ENCODE measurements at regions of chr2 and their contacts with region 1.

Region 1: DNA sequence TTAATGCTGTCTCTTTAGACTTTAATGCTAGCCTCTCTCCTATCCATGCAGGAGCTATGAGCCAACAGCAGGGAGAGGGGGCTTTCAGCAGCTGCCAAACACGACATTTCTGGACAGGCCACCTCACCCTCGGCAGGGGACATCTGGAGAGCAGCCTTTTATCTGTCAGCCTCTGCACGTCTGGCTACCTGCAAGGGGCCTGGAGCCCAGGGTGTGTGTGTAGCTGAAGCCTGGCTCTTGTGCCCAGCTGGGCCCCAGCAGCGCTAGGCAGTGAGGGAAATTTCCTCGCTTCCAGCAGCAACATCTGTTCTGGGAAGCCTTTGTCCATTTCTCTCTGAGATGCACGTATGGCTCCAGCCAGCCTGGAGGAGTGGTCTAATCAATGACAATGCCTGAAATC is 728.7 kb upstream of the ID2 start:
- DNase-seq: peak; percentile 89
- H3K4me3 ChIP-seq: no peak overlapping the region
- H3K27ac ChIP-seq: peak overlapping the region in 1 of 2 experiments; percentile 91; a peak in 2 of 4 replicates
- H3K4me1 ChIP-seq: peaks cover 0 to 35% of the 10 kb centered on the region in 2 experiments; a peak in 2 of 4 replicates
- H3K27me3 ChIP-seq: no peaks in the 10 kb centered on the region
- CTCF ChIP-seq: no peak
- EP300 ChIP-seq: peak in 1 of 2 experiments; percentile 83; a peak in 1 of 4 replicates
- RAD21 ChIP-seq: no peak

Region 2: DNA sequence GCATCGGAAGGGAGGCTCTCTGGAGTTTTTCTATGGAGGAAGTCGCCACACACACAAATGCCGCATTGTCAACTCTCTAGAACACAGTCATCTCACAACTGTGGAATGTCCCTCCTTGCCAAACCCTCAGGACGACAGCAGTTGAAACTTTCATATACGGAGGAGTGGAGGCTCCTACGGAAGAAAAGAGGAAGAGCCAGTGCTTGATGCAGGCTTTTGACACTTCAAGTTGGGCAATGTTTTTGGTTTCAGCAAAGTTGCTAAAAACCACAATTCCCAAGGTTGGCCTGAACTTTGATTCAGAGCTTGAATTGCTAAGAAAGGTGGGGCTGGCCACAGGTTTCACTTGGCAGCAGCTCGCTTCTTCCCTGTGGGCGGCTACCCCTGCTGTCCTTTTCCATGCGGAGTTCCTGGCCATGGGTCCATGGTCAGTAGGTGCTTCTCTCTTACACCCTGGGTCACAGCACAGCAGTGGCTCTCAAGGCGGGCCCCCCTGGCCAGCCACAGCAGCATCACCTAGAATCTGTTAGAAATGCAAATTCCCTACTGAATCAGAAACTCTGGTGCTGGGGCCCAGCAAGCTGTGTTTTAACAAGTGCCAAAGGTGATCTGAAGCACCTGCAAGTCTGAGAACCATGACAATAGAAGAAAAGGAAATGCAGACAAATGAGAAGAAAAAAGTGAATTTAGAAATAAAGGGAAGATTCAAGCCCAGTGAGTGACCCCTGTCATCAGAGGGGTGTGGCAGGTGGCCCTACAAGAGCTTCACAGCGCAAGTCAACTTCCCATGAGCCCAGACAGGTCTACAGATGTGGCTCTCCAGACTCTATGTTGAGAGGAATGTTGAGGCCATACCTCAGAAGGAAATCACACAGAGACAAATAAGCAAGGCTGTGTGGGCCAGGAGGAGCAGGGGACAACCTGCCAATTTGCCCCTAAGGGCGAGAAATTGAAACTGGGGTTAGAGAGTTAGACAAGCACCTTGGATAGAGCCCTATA is 179.5 kb before region 1 on chr2:
- CTCF ChIA-PET with region 1: no interaction called
- POLR2A ChIA-PET with region 1: no interaction called
- DNase-seq: no peak
- H3K4me3 ChIP-seq: no peak overlapping the region
- H3K27ac ChIP-seq: no peak overlapping the region
- H3K4me1 ChIP-seq: no peaks in the 10 kb centered on the region
- H3K27me3 ChIP-seq: no peaks in the 10 kb centered on the region
- CTCF ChIP-seq: no peak
- EP300 ChIP-seq: no peak
- RAD21 ChIP-seq: no peak

Region 3: DNA sequence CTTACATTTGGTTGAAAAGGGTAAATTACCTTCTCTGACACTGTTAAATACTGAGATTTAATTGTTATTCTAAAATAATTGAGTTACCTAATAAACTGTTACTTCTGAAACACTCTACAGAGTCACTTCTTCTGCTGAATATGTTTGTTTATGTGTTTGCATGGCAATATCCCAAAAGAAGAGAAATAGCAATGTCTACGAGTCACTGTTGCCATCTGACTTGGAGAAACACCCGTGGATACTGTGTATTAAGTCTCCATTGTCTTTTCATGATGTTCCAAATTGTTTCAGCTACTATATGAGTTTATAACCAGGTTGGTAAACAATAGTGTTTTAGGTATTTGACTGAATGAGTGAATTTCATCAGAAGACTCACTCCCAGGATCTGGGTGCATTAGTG is 25.5 kb before region 1 on chr2:
- CTCF ChIA-PET with region 1: no interaction called
- POLR2A ChIA-PET with region 1: no interaction called
- DNase-seq: no peak
- H3K4me3 ChIP-seq: no peak overlapping the region
- H3K27ac ChIP-seq: no peak overlapping the region
- H3K4me1 ChIP-seq: no peaks in the 10 kb centered on the region
- H3K27me3 ChIP-seq: no peaks in the 10 kb centered on the region
- CTCF ChIP-seq: no peak
- EP300 ChIP-seq: no peak
- RAD21 ChIP-seq: no peak

Region 4: GRCh38 chr2:7967707-7968405 is 14.7 kb after region 1 on chr2:
- CTCF ChIA-PET with region 1: interaction called, 10 read pairs
- POLR2A ChIA-PET with region 1: interaction called, 7 read pairs
- DNase-seq: no peak
- H3K4me3 ChIP-seq: no peak overlapping the region
- H3K27ac ChIP-seq: no peak overlapping the region
- H3K4me1 ChIP-seq: peaks cover 0 to 29% of the 10 kb centered on the region in 2 experiments; a peak in 2 of 4 replicates
- H3K27me3 ChIP-seq: no peaks in the 10 kb centered on the region
- CTCF ChIP-seq: no peak
- EP300 ChIP-seq: no peak
- RAD21 ChIP-seq: no peak

Measured in SK-N-SH (cell line).